Lower lobe of right lung (tissue), 2 donors: ENCODE measurements at regions of chr15 and their contacts with region 1.

Region 1: DNA sequence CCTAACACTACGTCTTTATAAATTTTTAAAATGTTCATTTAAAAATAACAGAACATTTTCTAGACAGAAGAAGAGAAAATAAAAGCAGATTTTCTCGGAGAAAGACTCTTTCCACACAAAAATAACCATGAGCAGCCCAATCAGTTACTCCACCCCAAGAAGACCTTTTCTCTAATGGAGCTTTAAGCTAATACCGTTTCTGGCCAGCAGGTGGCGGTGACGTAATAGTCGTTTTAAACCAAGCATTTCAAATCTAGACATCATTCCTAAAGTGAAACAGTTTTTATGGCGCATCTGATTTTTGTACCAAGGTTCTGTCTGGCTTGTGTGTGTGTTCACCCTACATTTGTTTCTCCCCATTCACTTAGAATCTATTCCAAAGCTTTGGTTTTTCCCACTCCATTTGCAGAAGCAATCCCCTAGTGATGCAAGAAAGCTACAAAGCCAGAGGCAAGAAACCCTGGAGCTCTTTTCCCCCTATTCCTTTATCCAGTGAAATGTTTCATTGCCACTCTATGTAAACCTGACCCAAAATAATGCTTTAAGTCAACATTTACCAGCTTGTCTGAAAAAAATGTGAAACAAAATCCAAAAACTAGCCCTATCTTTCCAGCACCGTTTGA is 336.7 kb upstream of the IGF1R start:
- DNase-seq: peak; percentile 70
- ATAC-seq: peak; percentile 54 to 57
- H3K4me3 ChIP-seq: no peak overlapping the region
- H3K27ac ChIP-seq: no peak overlapping the region
- H3K4me1 ChIP-seq: no peaks in the 10 kb centered on the region
- H3K27me3 ChIP-seq: no peaks in the 10 kb centered on the region
- CTCF ChIP-seq: peak; percentile 86

Region 2: GRCh38 chr15:98103570-98103969 is 208.1 kb before region 1 on chr15:
- intact Hi-C with region 1: no loop called
- DNase-seq: no peak
- ATAC-seq: no peak
- H3K4me3 ChIP-seq: no peak overlapping the region
- H3K27ac ChIP-seq: no peak overlapping the region
- H3K4me1 ChIP-seq: no peaks in the 10 kb centered on the region
- H3K27me3 ChIP-seq: peaks cover 3% of the 10 kb centered on the region
- CTCF ChIP-seq: no peak

Region 3: DNA sequence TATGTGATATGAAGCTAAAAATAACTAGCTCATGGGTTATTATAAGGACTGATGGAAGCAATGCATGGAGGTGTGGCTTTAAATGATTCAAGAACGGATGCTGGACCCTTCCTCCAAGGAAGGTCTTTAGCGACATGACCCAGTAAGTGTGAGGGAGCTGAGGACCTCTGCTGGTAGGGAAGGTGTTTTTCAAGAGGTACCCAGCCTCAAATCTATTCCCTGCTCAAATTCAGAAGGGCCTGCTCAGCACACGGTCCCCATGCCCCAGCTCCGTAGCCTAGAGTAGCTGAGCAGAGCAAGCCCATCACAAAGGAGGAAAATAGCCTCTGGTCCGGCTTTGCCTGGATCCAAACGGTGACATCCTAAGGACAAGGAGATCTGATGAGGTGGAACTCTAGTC is 70.5 kb after region 1 on chr15:
- intact Hi-C with region 1: no loop called
- DNase-seq: no peak
- ATAC-seq: no peak
- H3K4me3 ChIP-seq: no peak overlapping the region
- H3K27ac ChIP-seq: no peak overlapping the region
- H3K4me1 ChIP-seq: no peaks in the 10 kb centered on the region
- H3K27me3 ChIP-seq: no peaks in the 10 kb centered on the region
- CTCF ChIP-seq: no peak

Region 4: GRCh38 chr15:98421419-98422129 is 109.9 kb after region 1 on chr15:
- intact Hi-C with region 1: loop called (anchors 5 kb)
- DNase-seq: peak; percentile 78
- ATAC-seq: peak; percentile 85 to 90
- H3K4me3 ChIP-seq: peak overlapping the region; percentile 18
- H3K27ac ChIP-seq: no peak overlapping the region
- H3K4me1 ChIP-seq: peaks cover 14% of the 10 kb centered on the region
- H3K27me3 ChIP-seq: peaks cover 30% of the 10 kb centered on the region
- CTCF ChIP-seq: peak; percentile 99